BJ (cell line): ENCODE measurements at regions of chr2 and their contacts with region 1.

Region 1: GRCh38 chr2:152189622-152190495 is 14.3 kb upstream of the STAM2 start:
- DNase-seq: no peak
- H3K4me3 ChIP-seq: no peak overlapping the region
- H3K27me3 ChIP-seq: no peaks in the 10 kb centered on the region
- CTCF ChIP-seq: peak; percentile 80

Region 2: DNA sequence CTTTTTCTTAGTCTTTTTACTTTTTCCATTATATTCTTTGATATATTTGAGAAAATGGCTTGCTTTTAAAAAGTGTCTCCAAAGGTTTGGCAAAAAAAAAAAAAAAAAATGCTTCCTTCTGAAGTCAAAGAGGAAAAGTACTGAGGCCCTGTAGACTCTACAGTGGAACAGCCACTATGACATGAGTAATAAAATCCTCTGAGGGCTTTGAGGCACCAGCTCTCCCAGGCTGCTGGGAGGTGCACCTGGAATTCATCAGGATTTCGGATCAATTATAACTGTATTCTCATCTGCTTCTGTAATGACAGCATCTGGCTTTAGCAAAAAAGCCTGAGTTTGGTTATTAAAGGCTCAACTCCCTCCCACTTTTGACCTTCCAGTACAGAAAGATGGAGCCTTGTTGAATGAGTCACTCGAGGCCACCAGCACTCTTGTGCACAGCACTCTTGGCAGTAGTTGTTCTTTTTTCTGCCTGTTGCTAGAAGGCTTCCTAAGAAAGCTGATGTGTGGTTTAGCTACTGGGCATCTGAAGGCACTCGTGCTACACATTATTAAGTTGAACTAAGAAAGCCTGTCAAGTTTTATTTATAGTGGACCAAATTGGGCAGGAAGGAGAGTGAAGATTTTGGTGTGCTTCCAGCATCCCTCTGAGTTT is 396.1 kb after region 1 on chr2:
- CTCF ChIA-PET with region 1: no interaction called
- POLR2A ChIA-PET with region 1: no interaction called
- DNase-seq: peak; percentile 85
- H3K4me3 ChIP-seq: no peak overlapping the region
- H3K27me3 ChIP-seq: no peaks in the 10 kb centered on the region
- CTCF ChIP-seq: no peak

Region 3: GRCh38 chr2:152627351-152627957 is 437.6 kb after region 1 on chr2:
- CTCF ChIA-PET with region 1: interaction called, 16 read pairs
- POLR2A ChIA-PET with region 1: no interaction called
- DNase-seq: no peak
- H3K4me3 ChIP-seq: no peak overlapping the region
- H3K27me3 ChIP-seq: no peaks in the 10 kb centered on the region
- CTCF ChIP-seq: peak; percentile 63

Region 4: DNA sequence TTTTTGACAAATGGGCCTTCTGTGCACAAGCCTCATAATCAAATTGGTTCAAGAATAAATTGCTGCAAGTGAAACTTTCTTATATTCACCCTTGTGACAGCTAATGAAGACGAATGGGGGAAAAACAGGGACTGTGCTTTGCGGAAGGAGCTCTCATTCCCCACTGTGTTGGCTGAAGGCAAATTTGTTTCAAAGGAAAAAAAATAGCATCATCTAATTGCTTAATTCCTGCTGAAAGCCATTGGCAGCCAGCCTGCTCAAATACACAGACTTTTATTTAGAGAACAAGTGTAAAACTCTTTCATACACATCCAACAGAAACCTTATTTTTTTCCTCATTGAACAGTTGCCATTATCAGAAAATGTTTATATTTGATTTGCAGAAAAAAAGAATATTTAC is 700.9 kb after region 1 on chr2:
- CTCF ChIA-PET with region 1: no interaction called
- POLR2A ChIA-PET with region 1: no interaction called
- DNase-seq: no peak
- H3K4me3 ChIP-seq: no peak overlapping the region
- H3K27me3 ChIP-seq: no peaks in the 10 kb centered on the region; the same call in 1 of the 2 replicates
- CTCF ChIP-seq: no peak